Mammary epithelial cell (primary cell): ENCODE measurements at regions of chr10 and their contacts with region 1.

Region 1: GRCh38 chr10:110547139-110547761 is 20.2 kb upstream of the SMC3 start:
- DNase-seq: peak; percentile 48
- H3K4me3 ChIP-seq: no peak overlapping the region
- H3K27ac ChIP-seq: no peak overlapping the region
- H3K4me1 ChIP-seq: peaks cover 3% of the 10 kb centered on the region
- H3K27me3 ChIP-seq: peaks cover 2% of the 10 kb centered on the region
- CTCF ChIP-seq: peak; percentile 82 to 83

Region 2: DNA sequence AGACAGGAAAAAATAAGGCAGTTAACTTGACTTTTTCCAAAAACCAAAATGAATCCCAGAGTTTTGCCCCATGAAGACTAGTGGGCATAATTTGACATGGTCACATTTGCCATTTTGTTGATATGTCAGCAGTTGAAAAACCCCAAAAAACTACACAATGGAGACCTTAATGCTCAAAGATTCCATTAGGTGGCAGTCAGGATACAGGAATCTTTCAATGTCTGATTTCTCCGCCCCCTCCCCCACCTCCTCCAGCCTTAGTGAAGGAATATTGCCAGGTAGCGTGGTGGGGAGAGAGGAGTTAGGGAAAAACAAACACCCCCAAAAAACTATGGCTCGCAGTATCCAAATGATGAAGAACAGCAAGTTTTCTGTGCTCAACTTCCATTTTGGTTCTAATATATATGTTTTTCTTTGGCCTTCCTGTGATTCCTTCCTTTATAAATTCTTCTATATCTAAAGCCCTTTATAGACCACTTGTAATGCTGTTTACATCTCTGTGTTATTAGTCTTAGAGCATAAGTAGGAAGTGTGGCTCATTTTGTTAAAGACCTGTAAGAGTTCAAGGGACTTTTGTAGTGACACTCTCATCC is 235.8 kb before region 1 on chr10:
- CTCF ChIA-PET with region 1: interaction called, 3 read pairs
- dilution Hi-C with region 1: no loop called
- in situ Hi-C with region 1: loop called in 1 of 2 experiments (anchors 10 kb)
- intact Hi-C with region 1: loop called (anchors 1 kb)
- DNase-seq: peak; percentile 47
- H3K4me3 ChIP-seq: no peak overlapping the region
- H3K27ac ChIP-seq: no peak overlapping the region
- H3K4me1 ChIP-seq: peaks cover 10% of the 10 kb centered on the region
- H3K27me3 ChIP-seq: no peaks in the 10 kb centered on the region
- CTCF ChIP-seq: peak; percentile 66 to 71

Region 3: DNA sequence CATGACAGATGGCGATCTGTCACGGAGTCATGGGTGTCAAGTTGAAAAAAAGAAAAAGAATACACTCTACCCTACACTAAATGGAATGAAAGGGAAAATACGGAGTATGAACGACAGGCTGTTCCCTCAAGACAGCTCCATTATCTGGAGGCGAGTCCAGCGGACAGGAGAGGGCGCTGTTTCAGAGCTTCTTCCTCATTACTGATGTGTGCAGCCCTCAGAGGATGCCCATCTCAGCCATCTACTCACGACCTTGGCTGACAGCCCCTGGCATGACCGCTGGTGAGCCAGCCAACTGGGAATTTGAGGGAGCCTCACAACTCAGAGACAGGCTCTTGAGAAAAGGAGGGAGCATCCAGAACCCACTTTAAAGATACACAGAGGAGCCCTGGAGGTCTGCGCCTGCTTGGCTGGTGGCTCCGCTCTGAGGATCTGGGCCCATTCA is 192.9 kb before region 1 on chr10:
- CTCF ChIA-PET with region 1: no interaction called
- dilution Hi-C with region 1: no loop called
- in situ Hi-C with region 1: no loop called
- intact Hi-C with region 1: loop called (anchors 1 kb)
- DNase-seq: peak; percentile 87
- H3K4me3 ChIP-seq: peak overlapping the region; percentile 25 to 33 (median 32)
- H3K27ac ChIP-seq: peak overlapping the region; percentile 99
- H3K4me1 ChIP-seq: peaks cover 59% of the 10 kb centered on the region
- H3K27me3 ChIP-seq: no peaks in the 10 kb centered on the region
- CTCF ChIP-seq: peak; percentile 83 to 86

Region 4: GRCh38 chr10:110512461-110513187 is 34.6 kb before region 1 on chr10:
- CTCF ChIA-PET with region 1: no interaction called
- dilution Hi-C with region 1: loop called (anchors 5 kb)
- in situ Hi-C with region 1: no loop called
- intact Hi-C with region 1: no loop called
- DNase-seq: peak; percentile 87
- H3K4me3 ChIP-seq: no peak overlapping the region
- H3K27ac ChIP-seq: peak overlapping the region; percentile 21
- H3K4me1 ChIP-seq: peaks cover 20% of the 10 kb centered on the region
- H3K27me3 ChIP-seq: no peaks in the 10 kb centered on the region
- CTCF ChIP-seq: no peak

Region 5: DNA sequence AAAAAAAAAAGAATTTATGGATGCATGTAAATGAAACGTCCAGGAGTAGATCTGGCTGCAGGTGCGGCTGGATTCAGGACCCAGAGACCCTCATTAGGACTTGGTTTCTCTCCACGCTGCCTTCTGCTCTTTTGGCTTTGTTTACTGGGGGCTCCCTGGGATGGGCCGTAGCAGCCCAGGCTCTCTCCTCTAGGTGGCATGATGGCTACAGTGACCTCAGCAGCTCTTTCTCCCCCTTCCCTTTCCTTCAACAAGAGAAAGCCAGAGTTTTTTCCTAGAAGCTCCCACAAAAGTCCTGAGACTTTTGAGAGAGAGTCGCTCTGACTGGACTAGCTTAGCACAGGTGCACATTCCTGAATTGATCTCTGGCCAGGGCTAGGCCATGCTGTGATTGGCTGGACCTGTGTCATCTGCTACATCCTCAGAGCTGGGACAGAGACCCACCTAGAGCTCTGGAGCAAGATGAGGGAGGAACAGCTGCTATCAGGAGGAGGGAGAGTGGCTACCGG is 256.6 kb after region 1 on chr10:
- CTCF ChIA-PET with region 1: no interaction called
- dilution Hi-C with region 1: no loop called
- in situ Hi-C with region 1: no loop called
- intact Hi-C with region 1: no loop called
- DNase-seq: peak; percentile 40
- H3K4me3 ChIP-seq: no peak overlapping the region
- H3K27ac ChIP-seq: no peak overlapping the region
- H3K4me1 ChIP-seq: peaks cover 14% of the 10 kb centered on the region
- H3K27me3 ChIP-seq: no peaks in the 10 kb centered on the region
- CTCF ChIP-seq: peak; percentile 40 to 69